Activated B cell treated with CpG ODN at 0.5 μM for 24 hours (primary cell): ENCODE measurements at regions of chr12 and their contacts with region 1.

Region 1: DNA sequence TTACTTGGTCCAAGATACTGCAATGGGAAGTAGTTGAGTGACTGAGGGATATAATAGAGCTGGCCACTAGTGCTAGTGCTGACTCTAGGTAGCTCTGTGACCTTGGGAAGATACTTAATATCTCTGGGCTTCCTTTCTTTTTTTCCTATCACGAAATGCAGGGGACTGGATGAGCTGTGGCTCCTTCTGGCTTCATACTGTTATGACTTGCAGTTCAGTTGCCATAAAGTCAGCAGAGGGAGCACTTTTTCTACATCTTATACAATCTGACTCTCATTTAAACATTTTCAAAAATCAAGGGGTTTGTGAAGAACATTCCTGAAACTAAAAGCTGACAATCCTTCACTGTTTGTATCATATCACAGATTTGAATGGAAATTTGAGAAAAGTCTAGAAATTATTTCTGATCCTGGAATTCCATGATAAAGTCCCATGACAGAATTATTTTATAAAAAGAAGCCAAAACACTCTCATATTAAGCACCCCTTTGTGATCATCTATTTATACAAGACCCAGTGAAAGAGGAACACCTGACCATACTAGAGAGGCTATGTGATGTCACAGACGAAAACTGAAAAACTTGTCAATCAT is 5.4 kb downstream of the BHLHE41 start:
- DNase-seq: no peak
- ATAC-seq: no peak
- H3K4me3 Mint-ChIP-seq: peak overlapping the region; percentile 49
- H3K27ac Mint-ChIP-seq: peak overlapping the region; percentile 39
- H3K4me1 Mint-ChIP-seq: peaks cover 82% of the 10 kb centered on the region
- H3K27me3 Mint-ChIP-seq: no peaks in the 10 kb centered on the region
- CTCF ChIP-seq: no peak

Region 2: GRCh38 chr12:24378548-24379407 is 1740.7 kb before region 1 on chr12:
- CTCF ChIA-PET with region 1: no interaction called
- POLR2A ChIA-PET with region 1: no interaction called
- intact Hi-C with region 1: no loop called
- DNase-seq: peak; percentile 26
- ATAC-seq: peak; percentile 76
- H3K4me3 Mint-ChIP-seq: peak overlapping the region; percentile 84
- H3K27ac Mint-ChIP-seq: peak overlapping the region; percentile 95
- H3K4me1 Mint-ChIP-seq: peaks cover 40% of the 10 kb centered on the region
- H3K27me3 Mint-ChIP-seq: no peaks in the 10 kb centered on the region
- CTCF ChIP-seq: no peak

Region 3: DNA sequence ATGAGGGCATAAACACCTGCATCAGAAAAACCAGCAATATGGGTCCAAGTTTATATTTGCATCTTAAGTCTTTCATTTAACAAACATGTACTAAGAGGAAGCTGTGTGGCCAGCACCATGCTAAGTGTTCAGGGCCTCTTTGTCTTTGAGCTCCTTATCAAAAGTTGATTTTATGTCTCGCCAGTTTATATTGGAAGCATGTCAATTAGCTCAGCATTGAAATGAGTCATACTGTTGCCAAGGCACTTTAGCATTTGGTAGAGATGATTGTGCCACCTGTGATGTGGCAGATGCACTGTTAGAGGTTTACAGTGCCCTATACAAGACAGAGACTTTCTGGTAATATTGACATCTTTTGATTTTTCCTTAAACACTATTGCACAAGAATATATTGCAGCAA is 63.2 kb before region 1 on chr12:
- CTCF ChIA-PET with region 1: no interaction called
- POLR2A ChIA-PET with region 1: no interaction called
- intact Hi-C with region 1: no loop called
- DNase-seq: no peak
- ATAC-seq: no peak
- H3K4me3 Mint-ChIP-seq: no peak overlapping the region
- H3K27ac Mint-ChIP-seq: no peak overlapping the region
- H3K4me1 Mint-ChIP-seq: no peaks in the 10 kb centered on the region
- H3K27me3 Mint-ChIP-seq: no peaks in the 10 kb centered on the region
- CTCF ChIP-seq: no peak

Region 4: GRCh38 chr12:26097046-26097878 is 22.2 kb before region 1 on chr12:
- CTCF ChIA-PET with region 1: interaction called, 21 read pairs
- POLR2A ChIA-PET with region 1: interaction called, 6 read pairs
- intact Hi-C with region 1: loop called (anchors 1 kb)
- DNase-seq: peak; percentile 39
- ATAC-seq: peak; percentile 100
- H3K4me3 Mint-ChIP-seq: no peak overlapping the region
- H3K27ac Mint-ChIP-seq: no peak overlapping the region
- H3K4me1 Mint-ChIP-seq: peaks cover 5% of the 10 kb centered on the region
- H3K27me3 Mint-ChIP-seq: no peaks in the 10 kb centered on the region
- CTCF ChIP-seq: peak; percentile 88

Region 5: GRCh38 chr12:26274441-26275312 is 155.2 kb after region 1 on chr12:
- CTCF ChIA-PET with region 1: interaction called, 5 read pairs
- POLR2A ChIA-PET with region 1: interaction called, 4 read pairs
- intact Hi-C with region 1: loop called (anchors 1 kb)
- DNase-seq: peak; percentile 43
- ATAC-seq: peak; percentile 98
- H3K4me3 Mint-ChIP-seq: peak overlapping the region; percentile 28
- H3K27ac Mint-ChIP-seq: peak overlapping the region; percentile 78
- H3K4me1 Mint-ChIP-seq: peaks cover 53% of the 10 kb centered on the region
- H3K27me3 Mint-ChIP-seq: no peaks in the 10 kb centered on the region
- CTCF ChIP-seq: no peak

Region 6: DNA sequence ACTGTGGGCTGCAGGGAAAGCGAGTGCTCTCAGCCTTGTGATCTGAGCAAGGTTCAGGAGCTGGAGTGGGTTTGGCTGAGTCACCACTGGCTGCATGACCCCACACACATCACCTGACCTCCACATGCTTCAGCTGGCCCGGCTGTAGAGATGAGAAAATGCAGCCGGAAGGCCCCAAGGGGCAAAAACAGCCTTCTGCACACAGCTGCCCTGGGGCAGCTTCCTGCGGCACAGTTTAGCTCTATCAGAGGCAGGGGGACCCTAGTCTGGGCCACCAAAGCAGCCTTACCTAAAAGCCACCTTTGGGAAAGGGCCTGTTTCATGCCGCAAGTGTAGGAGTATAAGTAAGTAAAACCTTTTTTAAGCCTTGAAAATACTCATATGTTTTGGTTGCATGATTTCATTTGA is 199.2 kb after region 1 on chr12:
- CTCF ChIA-PET with region 1: interaction called, 9 read pairs
- POLR2A ChIA-PET with region 1: interaction called, 12 read pairs
- intact Hi-C with region 1: loop called (anchors 1 kb)
- DNase-seq: peak; percentile 50
- ATAC-seq: peak; percentile 85
- H3K4me3 Mint-ChIP-seq: peak overlapping the region; percentile 11
- H3K27ac Mint-ChIP-seq: peak overlapping the region; percentile 83
- H3K4me1 Mint-ChIP-seq: peaks cover 39% of the 10 kb centered on the region
- H3K27me3 Mint-ChIP-seq: no peaks in the 10 kb centered on the region
- CTCF ChIP-seq: no peak

Region 7: GRCh38 chr12:26523708-26524150 is 404.2 kb after region 1 on chr12:
- CTCF ChIA-PET with region 1: interaction called, 46 read pairs
- POLR2A ChIA-PET with region 1: interaction called, 3 read pairs
- intact Hi-C with region 1: loop called (anchors 1 kb)
- DNase-seq: no peak
- ATAC-seq: no peak
- H3K4me3 Mint-ChIP-seq: no peak overlapping the region
- H3K27ac Mint-ChIP-seq: no peak overlapping the region
- H3K4me1 Mint-ChIP-seq: peaks cover 20% of the 10 kb centered on the region
- H3K27me3 Mint-ChIP-seq: no peaks in the 10 kb centered on the region
- CTCF ChIP-seq: no peak

Region 8: GRCh38 chr12:26651566-26652188 is 532.2 kb after region 1 on chr12:
- CTCF ChIA-PET with region 1: interaction called, 8 read pairs
- POLR2A ChIA-PET with region 1: no interaction called
- intact Hi-C with region 1: loop called (anchors 1 kb)
- DNase-seq: no peak
- ATAC-seq: peak; percentile 62
- H3K4me3 Mint-ChIP-seq: no peak overlapping the region
- H3K27ac Mint-ChIP-seq: no peak overlapping the region
- H3K4me1 Mint-ChIP-seq: no peaks in the 10 kb centered on the region
- H3K27me3 Mint-ChIP-seq: no peaks in the 10 kb centered on the region
- CTCF ChIP-seq: no peak

Region 9: GRCh38 chr12:26691234-26691970 is 571.9 kb after region 1 on chr12:
- CTCF ChIA-PET with region 1: no interaction called
- POLR2A ChIA-PET with region 1: no interaction called
- intact Hi-C with region 1: no loop called
- DNase-seq: no peak
- ATAC-seq: no peak
- H3K4me3 Mint-ChIP-seq: no peak overlapping the region
- H3K27ac Mint-ChIP-seq: no peak overlapping the region
- H3K4me1 Mint-ChIP-seq: no peaks in the 10 kb centered on the region
- H3K27me3 Mint-ChIP-seq: no peaks in the 10 kb centered on the region
- CTCF ChIP-seq: no peak